Naive thymus-derived CD4-positive, alpha-beta T cell (primary cell): ENCODE measurements at regions of chr2 and their contacts with region 1.

Region 1: DNA sequence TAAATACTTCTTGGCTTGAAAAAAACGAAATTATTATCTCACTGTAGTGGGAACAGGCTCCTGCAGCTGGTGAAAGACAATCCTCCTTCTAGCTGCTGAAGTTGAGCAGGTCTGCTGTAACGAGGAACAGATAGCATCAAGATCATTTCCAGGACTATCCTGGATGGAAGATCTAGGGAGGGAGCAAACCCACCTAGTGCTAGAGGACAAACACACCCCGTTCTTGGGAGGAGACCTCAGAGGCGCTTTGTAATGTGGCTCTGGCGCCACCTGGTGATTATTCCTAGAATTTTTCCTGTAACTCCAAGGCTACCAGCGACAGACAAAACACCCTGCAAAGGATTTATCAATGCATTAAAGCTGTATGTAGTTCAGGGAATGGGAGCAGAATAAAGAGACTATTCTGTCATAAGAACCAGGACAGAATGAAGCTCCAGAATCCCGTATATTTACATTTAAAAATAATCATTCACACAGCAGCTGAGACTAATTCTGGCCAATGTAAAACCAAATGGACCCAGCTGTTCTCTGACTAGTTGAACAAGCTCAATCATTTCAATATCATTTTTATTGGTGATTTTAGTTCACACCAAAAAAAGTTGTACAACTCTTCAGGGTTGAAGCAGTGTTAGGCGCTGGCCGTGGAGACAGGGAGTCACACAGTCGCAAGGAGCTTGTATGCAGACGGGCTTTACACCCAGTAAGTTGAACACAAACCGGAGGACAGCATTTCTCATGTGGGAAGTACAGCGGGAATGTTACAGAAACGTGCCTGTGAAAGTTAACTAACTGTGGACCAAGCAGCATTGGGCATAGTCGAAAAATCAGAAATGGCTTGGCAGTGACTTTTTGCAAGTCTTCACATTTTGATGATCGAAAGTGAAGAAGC is 290.3 kb downstream of the TRIB2 start:
- DNase-seq: peak; percentile 31 to 70 (median 55)
- ATAC-seq: peak; percentile 66
- H3K4me3 ChIP-seq: no peak overlapping the region
- H3K4me3 Mint-ChIP-seq: no peak overlapping the region
- H3K27ac ChIP-seq: no peak overlapping the region
- H3K27ac Mint-ChIP-seq: peak overlapping the region in 1 of 9 donors; percentile 5
- H3K4me1 ChIP-seq: no peaks in the 10 kb centered on the region
- H3K4me1 Mint-ChIP-seq: peaks cover 0 to 9% (median 0%) of the 10 kb centered on the region in 7 donors
- H3K27me3 ChIP-seq: no peaks in the 10 kb centered on the region
- H3K27me3 Mint-ChIP-seq: peaks cover 5 to 52% (median 11%) of the 10 kb centered on the region in 5 donors

Region 2: DNA sequence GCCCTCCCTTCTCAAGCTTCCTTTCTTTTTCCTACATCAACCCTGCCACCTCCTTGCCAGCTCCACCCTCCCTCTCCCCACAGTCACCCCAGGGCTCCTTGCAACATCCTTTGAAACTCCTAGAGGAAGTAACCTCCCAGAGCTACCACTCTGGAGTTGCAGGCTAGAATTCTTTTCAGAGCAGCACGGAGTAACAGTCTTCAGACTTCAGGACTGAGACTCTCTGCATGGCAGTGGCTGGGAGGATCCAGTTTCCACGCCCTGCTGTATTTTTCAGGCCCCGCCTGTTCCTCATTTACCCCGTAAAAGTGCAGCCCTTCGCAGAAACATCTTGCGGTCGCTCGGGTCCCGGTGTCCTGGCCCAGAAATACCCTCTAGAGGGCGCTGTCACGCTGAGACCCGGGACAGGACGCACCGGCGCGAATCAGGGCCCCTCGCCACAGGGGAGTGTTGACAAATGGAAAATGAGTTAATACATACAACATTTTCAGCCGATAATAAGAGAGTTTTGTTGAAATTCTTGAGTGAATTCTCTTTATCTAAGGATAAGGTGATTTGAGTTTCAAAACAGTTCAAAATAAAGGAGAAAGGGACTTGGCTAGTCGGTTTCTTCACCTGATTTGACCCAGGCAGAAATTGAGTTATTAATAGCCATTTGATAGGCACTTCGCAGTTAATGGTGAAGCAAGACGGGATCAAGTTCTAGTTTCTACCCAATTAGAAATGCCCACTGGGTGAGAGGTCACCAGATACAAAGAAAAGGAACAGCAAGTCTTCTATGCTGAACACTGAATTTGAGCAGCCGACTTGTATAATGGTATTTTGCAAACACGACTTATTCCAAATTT is 1318.6 kb before region 1 on chr2:
- CTCF ChIA-PET with region 1: interaction called, 6 read pairs
- POLR2A ChIA-PET with region 1: no interaction called
- intact Hi-C with region 1: loop called (anchors 1 to 2 kb)
- DNase-seq: peak; percentile 62 to 82 (median 72)
- ATAC-seq: peak; percentile 93
- H3K4me3 ChIP-seq: peak overlapping the region; percentile 25
- H3K4me3 Mint-ChIP-seq: peak overlapping the region; percentile 25 to 73 (median 54)
- H3K27ac ChIP-seq: no peak overlapping the region
- H3K27ac Mint-ChIP-seq: peak overlapping the region in 2 of 9 donors; percentile 38 to 77
- H3K4me1 ChIP-seq: peaks cover 3 to 7% of the 10 kb centered on the region in 2 donors
- H3K4me1 Mint-ChIP-seq: peaks cover 7 to 19% (median 13%) of the 10 kb centered on the region in 7 donors
- H3K27me3 ChIP-seq: no peaks in the 10 kb centered on the region
- H3K27me3 Mint-ChIP-seq: peaks cover 0 to 21% (median 5%) of the 10 kb centered on the region in 5 donors

Region 3: DNA sequence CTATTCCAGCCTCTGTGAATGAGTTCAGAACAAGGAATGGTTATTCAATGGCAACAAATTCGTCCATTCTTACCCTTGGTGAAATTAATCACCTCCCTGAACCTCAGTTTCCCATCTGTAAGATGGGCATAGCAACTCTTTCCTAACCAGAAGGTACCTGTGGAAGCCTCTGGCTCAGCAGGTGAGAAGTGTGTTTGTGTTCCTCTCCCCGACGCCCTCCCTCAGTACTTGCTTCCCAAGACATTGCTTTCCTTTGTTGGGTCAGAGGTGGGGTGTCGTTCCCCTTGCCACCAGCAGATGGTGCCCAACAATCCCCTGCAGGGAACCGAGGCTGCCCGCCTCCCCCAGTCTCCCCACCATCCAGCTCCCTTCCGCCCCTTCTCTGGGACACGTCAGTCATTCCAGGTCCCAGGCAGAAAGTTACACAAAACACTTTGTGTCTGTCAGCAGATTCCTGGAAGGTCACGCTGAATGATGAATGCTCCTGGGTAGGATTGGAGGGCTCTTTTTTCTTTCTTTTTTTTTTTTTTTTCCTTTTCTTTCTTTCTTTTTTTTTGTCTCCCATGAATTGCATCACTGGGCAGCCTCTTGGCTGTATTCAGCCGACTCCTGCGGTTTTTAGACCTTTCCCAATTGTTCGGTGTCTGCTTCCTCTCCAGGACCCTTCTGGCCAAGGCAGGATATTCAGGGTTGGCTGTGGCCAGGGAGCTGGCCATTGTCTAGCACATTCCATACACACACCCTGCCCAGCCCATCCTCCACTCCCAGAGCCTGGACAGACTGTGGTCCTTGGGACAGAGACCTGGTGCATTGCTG is 1143.4 kb before region 1 on chr2:
- CTCF ChIA-PET with region 1: interaction called, 11 read pairs
- POLR2A ChIA-PET with region 1: no interaction called
- intact Hi-C with region 1: loop called (anchors 1 kb)
- DNase-seq: peak; percentile 38 to 71 (median 57)
- ATAC-seq: peak; percentile 88
- H3K4me3 ChIP-seq: peak overlapping the region; percentile 14
- H3K4me3 Mint-ChIP-seq: peak overlapping the region; percentile 28 to 71 (median 54)
- H3K27ac ChIP-seq: no peak overlapping the region
- H3K27ac Mint-ChIP-seq: peak overlapping the region in 2 of 9 donors; percentile 13 to 22
- H3K4me1 ChIP-seq: peaks cover 0 to 7% of the 10 kb centered on the region in 2 donors
- H3K4me1 Mint-ChIP-seq: peaks cover 8 to 14% (median 11%) of the 10 kb centered on the region in 7 donors
- H3K27me3 ChIP-seq: no peaks in the 10 kb centered on the region
- H3K27me3 Mint-ChIP-seq: peaks cover 0 to 28% (median 0%) of the 10 kb centered on the region in 5 donors

Region 4: GRCh38 chr2:12127638-12128037 is 879.4 kb before region 1 on chr2:
- CTCF ChIA-PET with region 1: interaction called, 5 read pairs
- POLR2A ChIA-PET with region 1: no interaction called
- intact Hi-C with region 1: loop called in 1 of 2 experiments (anchors 1 kb)
- DNase-seq: peak in 6 of 9 donors; percentile 40 to 63 (median 56)
- ATAC-seq: peak; percentile 80
- H3K4me3 ChIP-seq: peak overlapping the region; percentile 10
- H3K4me3 Mint-ChIP-seq: peak overlapping the region in 5 of 10 donors; percentile 34 to 90 (median 73)
- H3K27ac ChIP-seq: peak overlapping the region; percentile 63
- H3K27ac Mint-ChIP-seq: peak overlapping the region in 3 of 9 donors; percentile 84 to 95 (median 87)
- H3K4me1 ChIP-seq: peaks cover 22 to 61% of the 10 kb centered on the region in 2 donors
- H3K4me1 Mint-ChIP-seq: peaks cover 0 to 22% (median 0%) of the 10 kb centered on the region in 7 donors
- H3K27me3 ChIP-seq: no peaks in the 10 kb centered on the region
- H3K27me3 Mint-ChIP-seq: no peaks in the 10 kb centered on the region

Region 5: DNA sequence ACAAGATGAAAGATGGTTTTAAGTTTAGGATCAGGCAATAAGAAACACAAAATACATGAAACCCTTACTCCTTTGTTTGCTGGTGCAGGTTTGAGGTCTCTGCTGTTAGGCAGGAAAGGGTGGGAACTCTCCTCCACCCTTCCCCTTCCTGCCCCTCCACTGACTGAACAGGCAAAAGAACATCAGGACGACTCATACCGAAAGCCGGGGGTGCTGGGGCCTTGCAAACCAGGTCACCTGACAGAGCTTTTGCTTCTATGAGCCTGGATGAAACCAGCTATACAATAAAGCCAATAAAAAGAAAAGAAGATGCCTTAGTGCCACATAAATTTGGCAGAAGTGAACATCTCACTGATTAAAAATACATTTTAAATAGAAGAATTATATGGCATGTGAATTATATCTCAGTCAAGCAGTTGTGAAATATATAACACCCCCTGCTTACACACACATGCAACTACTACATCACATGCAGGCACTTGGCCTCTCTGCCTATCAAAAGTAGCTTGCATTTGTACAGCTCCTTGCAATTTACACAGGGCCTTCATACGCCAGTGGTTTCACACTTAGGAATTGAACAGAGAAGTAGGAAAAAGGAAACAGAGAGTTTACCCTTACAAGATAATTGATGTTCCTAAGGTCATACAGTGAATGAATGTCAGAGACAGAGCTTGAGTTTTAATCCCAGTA is 505.5 kb before region 1 on chr2:
- CTCF ChIA-PET with region 1: no interaction called
- POLR2A ChIA-PET with region 1: no interaction called
- intact Hi-C with region 1: no loop called
- DNase-seq: peak in 8 of 9 donors; percentile 39 to 74 (median 70)
- ATAC-seq: peak; percentile 86
- H3K4me3 ChIP-seq: peak overlapping the region; percentile 5
- H3K4me3 Mint-ChIP-seq: peak overlapping the region; percentile 64 to 83 (median 77)
- H3K27ac ChIP-seq: peak overlapping the region; percentile 69
- H3K27ac Mint-ChIP-seq: peak overlapping the region; percentile 87 to 96 (median 91)
- H3K4me1 ChIP-seq: peaks cover 89 to 98% of the 10 kb centered on the region in 2 donors
- H3K4me1 Mint-ChIP-seq: peaks cover 74 to 100% (median 98%) of the 10 kb centered on the region in 7 donors
- H3K27me3 ChIP-seq: no peaks in the 10 kb centered on the region
- H3K27me3 Mint-ChIP-seq: no peaks in the 10 kb centered on the region

Region 6: DNA sequence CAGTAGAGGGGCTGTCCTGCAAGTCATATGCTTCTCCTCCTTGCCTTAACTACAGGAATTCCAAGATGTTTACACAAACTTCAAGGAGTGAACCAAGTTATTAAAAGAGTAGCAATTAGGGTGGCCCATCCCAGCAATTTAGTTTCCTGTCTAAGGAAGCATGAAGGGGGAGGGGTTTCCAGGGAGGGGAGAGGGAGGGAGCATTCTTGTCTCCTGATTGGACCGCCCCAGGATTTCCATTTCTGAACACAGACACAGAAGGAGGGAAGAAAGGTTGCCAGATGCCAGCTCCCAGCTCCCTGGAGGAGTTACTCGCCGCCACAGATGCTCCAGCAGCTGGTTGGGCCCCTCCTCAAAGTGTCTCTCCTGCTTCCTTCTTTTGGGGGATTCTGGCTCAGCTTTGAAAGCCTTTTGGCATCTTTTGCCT is 182.7 kb before region 1 on chr2:
- CTCF ChIA-PET with region 1: no interaction called
- POLR2A ChIA-PET with region 1: no interaction called
- intact Hi-C with region 1: loop called in 1 of 2 experiments (anchors 1 kb)
- DNase-seq: no peak
- ATAC-seq: no peak
- H3K4me3 ChIP-seq: no peak overlapping the region
- H3K4me3 Mint-ChIP-seq: no peak overlapping the region
- H3K27ac ChIP-seq: no peak overlapping the region
- H3K27ac Mint-ChIP-seq: no peak overlapping the region
- H3K4me1 ChIP-seq: peaks cover 0 to 4% of the 10 kb centered on the region in 2 donors
- H3K4me1 Mint-ChIP-seq: peaks cover 0 to 21% (median 14%) of the 10 kb centered on the region in 7 donors
- H3K27me3 ChIP-seq: no peaks in the 10 kb centered on the region
- H3K27me3 Mint-ChIP-seq: peaks cover 0 to 23% (median 16%) of the 10 kb centered on the region in 5 donors